CD4-positive, alpha-beta T cell (primary cell): ENCODE measurements at regions of chr10 and their contacts with region 1.

Region 1: GRCh38 chr10:73983096-73984047 is 14.5 kb upstream of the VCL start:
- DNase-seq: peak in 1 of 14 experiments; percentile 34
- ATAC-seq: no peak
- H3K4me3 ChIP-seq: no peak overlapping the region
- H3K4me3 Mint-ChIP-seq: no peak overlapping the region
- H3K27ac ChIP-seq: no peak overlapping the region
- H3K27ac Mint-ChIP-seq: peak overlapping the region; percentile 14
- H3K4me1 ChIP-seq: peaks cover 10% of the 10 kb centered on the region
- H3K4me1 Mint-ChIP-seq: peaks cover 14% of the 10 kb centered on the region
- H3K27me3 ChIP-seq: no peaks in the 10 kb centered on the region
- H3K27me3 Mint-ChIP-seq: no peaks in the 10 kb centered on the region
- CTCF ChIP-seq: no peak

Region 2: GRCh38 chr10:73167783-73168464 is 815.4 kb before region 1 on chr10 and contains the starts of genes ECD and FAM149B1:
- CTCF ChIA-PET with region 1: no interaction called
- POLR2A ChIA-PET with region 1: no interaction called
- intact Hi-C with region 1: no loop called
- DNase-seq: peak; percentile 79 to 96 (median 86)
- ATAC-seq: peak; percentile 92
- H3K4me3 ChIP-seq: peak within 1 kb of the TSS; percentile 90
- H3K4me3 Mint-ChIP-seq: peak within 1 kb of the TSS; percentile 94
- H3K27ac ChIP-seq: peak within 1 kb of the TSS; percentile 96 to 97
- H3K27ac Mint-ChIP-seq: peak within 1 kb of the TSS; percentile 98
- H3K4me1 ChIP-seq: peaks cover 13% of the 10 kb centered on the region
- H3K4me1 Mint-ChIP-seq: peaks cover 45% of the 10 kb centered on the region
- H3K27me3 ChIP-seq: no peaks in the 10 kb centered on the region
- H3K27me3 Mint-ChIP-seq: no peaks in the 10 kb centered on the region
- CTCF ChIP-seq: no peak
- total RNA-seq, gene ECD: 50.5 to 57.7 TPM
- total RNA-seq, gene FAM149B1: 7.0 to 7.7 TPM

Region 3: GRCh38 chr10:73931767-73932619 is 51.4 kb before region 1 on chr10:
- CTCF ChIA-PET with region 1: no interaction called
- POLR2A ChIA-PET with region 1: no interaction called
- intact Hi-C with region 1: no loop called
- DNase-seq: peak in 13 of 14 experiments; percentile 25 to 81 (median 52)
- ATAC-seq: peak; percentile 95
- H3K4me3 ChIP-seq: no peak overlapping the region
- H3K4me3 Mint-ChIP-seq: no peak overlapping the region
- H3K27ac ChIP-seq: no peak overlapping the region
- H3K27ac Mint-ChIP-seq: no peak overlapping the region
- H3K4me1 ChIP-seq: peaks cover 13% of the 10 kb centered on the region
- H3K4me1 Mint-ChIP-seq: peaks cover 13% of the 10 kb centered on the region
- H3K27me3 ChIP-seq: peaks cover 0 to 3% of the 10 kb centered on the region in 2 experiments
- H3K27me3 Mint-ChIP-seq: peaks cover 18% of the 10 kb centered on the region
- CTCF ChIP-seq: no peak

Region 4: DNA sequence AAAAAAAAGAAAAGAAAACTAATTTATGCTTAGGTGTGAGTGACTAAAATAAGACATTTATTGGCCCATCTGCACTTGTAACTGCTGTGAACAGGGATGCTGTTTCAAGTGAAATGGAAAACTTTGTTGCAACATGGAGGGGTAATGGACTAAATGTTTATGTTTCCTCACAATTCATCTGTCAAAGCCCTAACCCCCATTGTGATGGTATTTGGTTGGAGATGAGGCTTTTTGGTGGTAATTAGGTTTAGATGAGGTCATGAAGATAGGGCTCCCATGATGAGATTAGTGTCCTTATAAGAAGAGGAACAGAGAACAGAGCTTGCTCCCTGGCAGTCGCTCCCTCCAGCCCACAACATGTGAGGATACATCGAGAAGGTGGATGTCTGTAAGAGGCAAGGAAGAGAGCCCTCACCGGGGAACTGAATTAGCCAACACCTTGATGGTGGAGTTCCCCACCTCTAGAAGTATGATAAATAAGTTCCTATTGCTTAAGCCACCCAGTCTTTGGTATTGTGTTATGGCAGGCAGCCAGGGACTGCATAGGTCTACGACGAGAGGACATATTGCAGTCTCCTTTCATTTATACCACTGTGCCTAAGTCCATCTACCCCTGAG is 14.0 kb before region 1 on chr10:
- CTCF ChIA-PET with region 1: no interaction called
- POLR2A ChIA-PET with region 1: interaction called, 6 read pairs
- intact Hi-C with region 1: loop called in 1 of 2 experiments (anchors 1 kb)
- DNase-seq: peak in 2 of 14 experiments; percentile 20 to 28
- ATAC-seq: no peak
- H3K4me3 ChIP-seq: no peak overlapping the region
- H3K4me3 Mint-ChIP-seq: no peak overlapping the region
- H3K27ac ChIP-seq: no peak overlapping the region
- H3K27ac Mint-ChIP-seq: no peak overlapping the region
- H3K4me1 ChIP-seq: peaks cover 10% of the 10 kb centered on the region
- H3K4me1 Mint-ChIP-seq: peaks cover 14% of the 10 kb centered on the region
- H3K27me3 ChIP-seq: no peaks in the 10 kb centered on the region
- H3K27me3 Mint-ChIP-seq: no peaks in the 10 kb centered on the region
- CTCF ChIP-seq: no peak